ENCODE measurements at regions of chrX and their contacts with region 1.

Region 1: GRCh38 chrX:146854281-146854680 is 39.7 kb upstream of the CXorf51A start:
- DNase-seq: no peak
- ATAC-seq: no peak
- H3K4me3 ChIP-seq: no peak overlapping the region
- H3K27ac ChIP-seq: no peak overlapping the region
- H3K4me1 ChIP-seq: no peaks in the 10 kb centered on the region
- H3K27me3 ChIP-seq: no peaks in the 10 kb centered on the region
- CTCF ChIP-seq: no peak

Region 2: GRCh38 chrX:146363919-146364318 is 490.4 kb before region 1 on chrX:
- intact Hi-C with region 1: no loop called
- DNase-seq: no peak
- ATAC-seq: no peak
- H3K4me3 ChIP-seq: no peak overlapping the region
- H3K27ac ChIP-seq: no peak overlapping the region
- H3K4me1 ChIP-seq: no peaks in the 10 kb centered on the region
- H3K27me3 ChIP-seq: no peaks in the 10 kb centered on the region
- CTCF ChIP-seq: no peak

Region 3: GRCh38 chrX:146581981-146582712 is 272.1 kb before region 1 on chrX:
- intact Hi-C with region 1: no loop called
- DNase-seq: no peak
- ATAC-seq: no peak
- H3K4me3 ChIP-seq: no peak overlapping the region
- H3K27ac ChIP-seq: no peak overlapping the region
- H3K4me1 ChIP-seq: no peaks in the 10 kb centered on the region
- H3K27me3 ChIP-seq: no peaks in the 10 kb centered on the region
- CTCF ChIP-seq: no peak

Region 4: DNA sequence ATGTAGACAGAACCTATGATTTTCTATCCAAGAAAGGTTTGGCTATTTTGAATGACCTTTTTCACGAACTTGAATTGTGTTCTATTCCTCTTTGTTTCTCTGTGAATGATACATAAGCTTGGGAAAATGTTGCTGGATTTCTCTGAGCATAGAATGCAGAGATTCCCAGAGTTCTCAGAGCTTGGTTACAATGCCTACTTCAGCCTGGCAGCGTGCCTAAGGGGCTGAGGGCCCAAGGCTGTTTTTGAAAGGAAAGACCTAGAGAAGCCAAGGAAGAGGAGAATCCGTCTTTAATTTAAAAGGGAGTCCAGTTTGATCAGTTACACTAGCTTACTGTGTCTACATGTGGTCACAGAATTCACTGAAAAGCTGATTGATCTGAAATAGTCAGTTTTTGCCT is 100.0 kb before region 1 on chrX:
- intact Hi-C with region 1: no loop called
- DNase-seq: no peak
- ATAC-seq: no peak
- H3K4me3 ChIP-seq: no peak overlapping the region
- H3K27ac ChIP-seq: no peak overlapping the region
- H3K4me1 ChIP-seq: no peaks in the 10 kb centered on the region
- H3K27me3 ChIP-seq: no peaks in the 10 kb centered on the region
- CTCF ChIP-seq: no peak

Region 5: DNA sequence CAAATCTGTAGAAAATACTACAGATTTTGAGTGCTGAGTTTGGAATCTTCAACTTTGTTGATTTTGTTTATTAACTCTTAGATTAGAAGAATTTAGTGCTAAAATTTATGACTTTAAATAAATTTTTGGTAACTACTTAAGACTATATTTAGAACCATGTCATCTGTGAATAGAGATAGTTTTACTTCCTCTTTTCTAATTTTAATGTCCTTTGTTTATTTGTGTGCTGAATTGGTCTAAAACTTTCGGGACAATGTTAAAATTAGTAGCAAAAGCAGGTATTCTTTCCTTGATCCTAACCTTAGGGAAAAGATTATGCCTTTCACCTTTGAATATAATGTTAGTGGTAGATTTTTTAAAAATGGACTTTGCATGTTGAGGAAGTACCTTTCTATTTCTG is 80.0 kb after region 1 on chrX:
- intact Hi-C with region 1: no loop called
- DNase-seq: no peak
- ATAC-seq: no peak
- H3K4me3 ChIP-seq: no peak overlapping the region
- H3K27ac ChIP-seq: no peak overlapping the region
- H3K4me1 ChIP-seq: no peaks in the 10 kb centered on the region
- H3K27me3 ChIP-seq: no peaks in the 10 kb centered on the region
- CTCF ChIP-seq: no peak

Region 6: DNA sequence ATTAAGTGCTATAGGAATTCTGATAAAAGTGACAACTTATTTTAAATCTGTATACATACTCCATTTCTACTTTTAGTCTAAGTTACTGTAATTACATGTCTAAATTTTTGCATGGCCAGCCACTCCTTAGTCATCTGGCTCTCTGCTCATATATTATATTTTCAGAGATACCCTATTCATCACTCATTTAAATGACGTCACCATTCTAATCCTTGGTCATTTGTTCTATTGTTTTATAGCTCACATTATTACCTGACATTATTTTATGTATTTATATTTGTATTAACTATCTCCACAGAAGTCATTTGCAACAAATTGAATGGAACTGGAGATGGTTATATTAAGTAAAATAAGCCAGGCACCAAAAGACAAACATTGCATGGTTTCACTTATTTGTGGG is 139.9 kb after region 1 on chrX:
- intact Hi-C with region 1: loop called in 1 of 2 experiments (anchors 5 kb)
- DNase-seq: no peak
- ATAC-seq: no peak
- H3K4me3 ChIP-seq: no peak overlapping the region
- H3K27ac ChIP-seq: no peak overlapping the region
- H3K4me1 ChIP-seq: no peaks in the 10 kb centered on the region
- H3K27me3 ChIP-seq: no peaks in the 10 kb centered on the region
- CTCF ChIP-seq: no peak

Measured in psoas muscle (tissue), 8 donors.